ENCODE measurements at regions of chr10 and their contacts with region 1.

Region 1: GRCh38 chr10:69742928-69743602 is 58.6 kb upstream of the COL13A1 start:
- DNase-seq: no peak
- H3K4me3 ChIP-seq: no peak overlapping the region
- CTCF ChIP-seq: peak; percentile 78

Region 2: DNA sequence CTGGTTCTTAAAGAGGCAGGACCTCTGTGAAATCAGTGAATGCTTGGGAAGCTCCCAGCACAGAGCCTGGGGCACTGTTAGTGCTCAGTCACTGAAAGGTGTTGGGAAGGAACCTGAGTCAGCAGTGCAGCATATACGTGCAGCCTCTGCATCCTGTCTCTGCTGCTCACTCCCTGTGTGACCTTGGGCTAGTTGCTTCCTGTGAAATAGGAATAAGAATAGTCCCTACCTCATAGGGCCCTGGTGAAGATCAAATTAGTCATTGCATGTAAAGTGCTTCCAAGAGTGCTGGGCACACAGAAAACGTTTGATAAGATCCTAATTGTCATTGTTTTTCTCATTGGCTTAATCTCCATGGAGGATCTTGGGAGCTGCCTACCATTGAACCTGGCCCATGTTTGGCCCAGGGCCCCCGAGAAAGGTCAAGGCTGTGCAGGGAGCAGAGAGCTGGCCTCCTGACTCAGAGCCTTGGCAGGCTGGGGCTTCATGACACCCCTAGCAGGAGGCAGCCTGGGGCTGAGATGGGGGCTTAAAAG is 14.7 kb before region 1 on chr10:
- CTCF ChIA-PET with region 1: interaction called, 14 read pairs
- POLR2A ChIA-PET with region 1: no interaction called
- DNase-seq: no peak
- H3K4me3 ChIP-seq: no peak overlapping the region
- CTCF ChIP-seq: no peak

Region 3: DNA sequence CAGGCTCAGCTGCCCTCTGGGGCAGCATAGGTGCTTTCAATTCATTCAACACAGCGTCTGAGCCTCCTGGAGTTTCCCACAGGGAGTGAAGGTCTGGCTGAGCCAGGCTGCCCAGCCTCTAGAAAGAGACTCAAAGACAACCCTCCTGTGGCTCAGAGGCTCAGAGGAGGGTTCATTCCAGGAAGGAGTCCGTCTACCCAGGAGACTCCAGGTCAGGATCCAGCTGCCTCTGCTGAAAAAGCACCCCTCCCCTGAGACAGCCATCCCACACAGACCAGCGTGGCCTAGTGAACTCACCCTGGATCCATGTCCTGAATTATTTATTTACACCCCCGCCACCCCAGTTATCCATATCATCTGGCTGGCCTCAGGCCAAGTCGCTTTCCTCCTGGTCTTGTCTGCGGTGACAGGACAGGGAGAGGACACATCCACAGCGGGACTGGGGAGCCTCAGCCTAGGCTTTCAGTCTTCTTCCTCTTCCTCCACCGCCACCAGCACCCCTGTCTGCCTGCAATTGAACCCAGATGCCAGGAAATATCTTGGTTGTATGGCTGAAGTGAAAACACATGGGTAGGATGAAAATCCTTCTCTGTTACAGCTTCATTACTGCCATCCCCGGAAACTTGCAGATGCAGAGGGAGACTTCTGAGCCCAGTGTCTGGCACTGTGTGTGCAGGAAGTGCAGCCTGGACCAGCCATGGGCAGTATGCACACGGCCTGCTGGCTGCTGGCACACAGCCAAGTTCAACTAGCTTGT is 14.7 kb after region 1 on chr10:
- CTCF ChIA-PET with region 1: interaction called, 12 read pairs
- POLR2A ChIA-PET with region 1: no interaction called
- DNase-seq: no peak
- H3K4me3 ChIP-seq: no peak overlapping the region
- CTCF ChIP-seq: no peak

Region 4: DNA sequence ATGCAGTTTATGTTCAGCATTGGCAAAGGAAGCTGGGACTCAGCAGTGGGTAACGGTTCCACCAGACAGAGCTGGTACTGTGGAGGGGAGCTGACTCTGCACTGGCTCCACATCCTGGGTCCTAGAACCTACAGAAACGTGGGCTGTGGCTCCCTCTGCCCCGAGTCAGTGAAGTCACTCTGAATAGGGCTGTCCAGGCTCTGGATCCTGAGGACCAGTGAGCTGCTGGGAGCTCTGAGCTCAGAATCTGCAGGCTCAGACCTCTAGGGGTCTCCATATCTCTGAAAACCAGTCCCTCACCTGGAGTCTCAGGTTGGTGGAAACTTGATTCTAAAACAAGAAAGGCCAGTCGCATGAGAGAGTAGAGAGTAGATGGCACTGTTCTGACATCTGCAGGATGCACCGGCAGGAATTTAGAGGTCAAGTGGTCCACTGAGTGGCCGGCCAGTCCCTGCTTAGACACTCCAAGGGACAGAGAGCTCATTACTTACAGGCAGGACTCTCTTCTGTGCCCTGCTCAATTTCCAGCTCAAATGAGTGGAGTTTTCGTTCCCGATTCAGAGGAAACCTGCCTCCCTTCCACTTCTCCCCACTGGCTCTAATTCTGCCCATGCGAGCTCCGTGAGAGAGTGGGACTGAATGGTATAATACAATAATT is 522.1 kb after region 1 on chr10:
- CTCF ChIA-PET with region 1: no interaction called
- POLR2A ChIA-PET with region 1: no interaction called
- DNase-seq: no peak
- H3K4me3 ChIP-seq: no peak overlapping the region
- CTCF ChIP-seq: no peak

Measured in AG04449 (cell line).